Activated CD4-positive, alpha-beta memory T cell treated with anti-CD3 and anti-CD28 coated beads for 36 hours (primary cell): ENCODE measurements at regions of chr12 and their contacts with region 1.

Region 1: DNA sequence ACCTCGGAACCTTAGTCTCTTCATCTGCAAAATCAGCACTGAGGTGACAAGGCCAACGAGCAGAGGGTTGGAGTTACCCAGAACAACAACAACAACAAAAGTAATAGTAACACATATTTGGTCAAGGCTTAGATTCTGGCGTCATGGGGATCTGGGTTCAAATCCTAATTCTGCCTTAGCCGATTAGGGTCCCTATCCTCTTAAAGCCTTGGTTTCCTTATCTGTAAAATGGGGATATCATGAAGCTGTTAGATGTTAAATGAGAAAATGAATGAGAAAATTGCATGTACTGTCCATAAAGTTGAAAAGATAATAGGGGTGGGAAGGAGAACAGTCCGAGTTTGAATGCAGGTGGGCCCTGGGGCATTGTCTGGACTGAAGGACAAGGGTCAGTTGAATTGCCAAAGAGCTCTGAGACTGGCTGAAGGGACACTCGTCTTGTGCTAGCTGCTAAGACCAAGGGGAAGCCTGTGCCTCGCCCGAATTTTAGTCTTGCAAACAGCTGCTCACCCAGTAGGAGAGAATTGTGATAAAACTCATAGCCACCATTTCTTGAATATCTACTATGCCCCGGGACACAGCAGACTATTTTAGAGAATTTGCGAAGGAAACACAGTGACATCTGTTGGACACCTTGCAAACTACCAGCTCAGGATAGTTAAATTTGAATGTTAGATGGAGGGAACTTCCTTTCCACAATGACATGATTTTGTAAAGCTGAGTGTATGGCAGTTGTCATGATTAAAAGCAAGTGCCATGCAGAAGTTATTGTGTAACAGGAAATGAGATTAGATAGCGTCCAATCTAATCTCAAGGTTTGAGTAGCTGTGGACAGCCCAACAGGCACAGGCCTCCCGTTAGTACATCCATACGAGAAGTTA is 6.8 kb upstream of the HNF1A start:
- DNase-seq: peak; percentile 32
- H3K4me3 Mint-ChIP-seq: no peak overlapping the region
- H3K27ac Mint-ChIP-seq: no peak overlapping the region
- H3K4me1 Mint-ChIP-seq: peaks cover 4% of the 10 kb centered on the region
- H3K27me3 Mint-ChIP-seq: no peaks in the 10 kb centered on the region

Region 2: GRCh38 chr12:120797677-120798642 is 173.6 kb before region 1 on chr12:
- CTCF ChIA-PET with region 1: interaction called, 10 read pairs
- POLR2A ChIA-PET with region 1: interaction called, 4 read pairs
- intact Hi-C with region 1: no loop called
- DNase-seq: peak; percentile 21
- H3K4me3 Mint-ChIP-seq: no peak overlapping the region
- H3K27ac Mint-ChIP-seq: peak overlapping the region; percentile 82
- H3K4me1 Mint-ChIP-seq: peaks cover 59% of the 10 kb centered on the region
- H3K27me3 Mint-ChIP-seq: no peaks in the 10 kb centered on the region

Region 3: DNA sequence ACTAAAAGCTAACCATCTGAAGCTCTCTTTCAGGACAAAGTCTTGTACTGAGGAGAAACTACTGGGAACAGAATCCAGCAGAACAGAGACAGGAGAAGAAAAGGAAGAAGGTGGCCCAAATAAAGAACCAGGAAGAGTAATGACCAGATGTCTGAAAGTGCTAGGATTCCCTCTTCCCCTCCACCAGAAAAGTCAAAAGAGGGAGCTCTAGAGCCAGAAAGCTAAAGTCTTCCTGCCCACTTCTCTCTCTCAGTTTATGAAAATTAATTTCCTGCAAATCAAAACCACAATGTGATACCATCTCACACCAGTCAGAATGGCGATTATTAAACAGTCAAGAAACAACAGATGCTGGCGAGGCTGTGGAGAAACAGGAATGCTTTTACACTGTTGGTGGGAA is 114.6 kb before region 1 on chr12:
- CTCF ChIA-PET with region 1: interaction called, 11 read pairs
- POLR2A ChIA-PET with region 1: no interaction called
- intact Hi-C with region 1: no loop called
- DNase-seq: no peak
- H3K4me3 Mint-ChIP-seq: no peak overlapping the region
- H3K27ac Mint-ChIP-seq: no peak overlapping the region
- H3K4me1 Mint-ChIP-seq: peaks cover 34% of the 10 kb centered on the region
- H3K27me3 Mint-ChIP-seq: no peaks in the 10 kb centered on the region

Region 4: GRCh38 chr12:120944645-120945231 is 26.8 kb before region 1 on chr12:
- CTCF ChIA-PET with region 1: interaction called, 51 read pairs
- POLR2A ChIA-PET with region 1: interaction called, 3 read pairs
- intact Hi-C with region 1: loop called (anchors 1 kb)
- DNase-seq: peak; percentile 81
- H3K4me3 Mint-ChIP-seq: no peak overlapping the region
- H3K27ac Mint-ChIP-seq: peak overlapping the region; percentile 9
- H3K4me1 Mint-ChIP-seq: peaks cover 7% of the 10 kb centered on the region
- H3K27me3 Mint-ChIP-seq: no peaks in the 10 kb centered on the region